H1 (cell line): ENCODE measurements at regions of chr6 and their contacts with region 1.

Region 1: DNA sequence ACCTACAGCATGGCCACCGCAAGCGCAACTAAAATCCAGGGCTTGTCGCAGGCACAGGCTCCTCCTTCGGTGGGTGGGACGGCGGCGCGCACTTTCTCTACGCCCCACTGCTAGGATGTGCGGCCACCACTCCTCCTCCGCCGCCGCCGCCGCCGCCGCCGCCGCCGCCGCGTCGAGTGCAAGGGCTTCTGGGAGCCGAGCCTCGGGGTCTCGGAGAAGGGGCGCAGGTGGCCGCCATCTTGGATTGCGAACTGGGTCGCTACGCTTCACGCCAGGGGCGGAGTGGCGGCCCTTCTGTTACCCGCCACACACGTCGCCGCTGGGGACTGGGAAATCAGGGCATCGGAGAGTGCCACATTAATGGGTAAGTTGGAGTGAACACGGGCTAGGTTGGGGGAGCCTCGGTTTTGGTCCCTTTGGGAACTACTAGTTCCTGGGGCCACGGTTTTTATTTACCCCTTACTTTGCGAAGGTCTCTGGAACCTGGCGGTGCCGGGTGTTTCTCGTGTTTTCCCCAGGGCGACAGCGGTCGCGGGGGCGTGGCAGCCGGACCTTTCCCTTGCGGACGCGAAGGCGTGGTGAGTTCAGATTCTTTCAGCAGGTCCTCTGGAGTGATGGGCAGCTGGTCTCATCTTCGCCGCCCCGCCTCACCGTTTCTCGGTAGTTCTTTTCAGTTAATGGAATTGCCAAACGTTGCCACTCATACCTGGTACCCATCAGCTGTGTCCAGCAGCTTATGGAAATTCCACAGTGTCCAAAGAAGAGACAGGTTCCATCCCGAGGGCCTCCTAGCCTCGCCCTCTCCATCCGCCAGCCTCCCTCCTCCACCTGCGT is at the start of gene KPNA5:
- DNase-seq: peak; percentile 67 to 89
- H3K4me3 ChIP-seq: peak within 1 kb of the TSS; percentile 81 to 93 (median 88)
- H3K27ac ChIP-seq: peak within 1 kb of the TSS; percentile 91
- H3K4me1 ChIP-seq: peaks cover 0 to 2% (median 0%) of the 10 kb centered on the region in 4 experiments; a peak in 1 of 7 replicates
- H3K27me3 ChIP-seq: no peaks in the 10 kb centered on the region
- CTCF ChIP-seq: no peak
- EP300 ChIP-seq: peak in 1 of 2 experiments; percentile 64; a peak in 1 of 3 replicates
- POLR2A ChIP-seq: peak; percentile 63 to 94
- RAD21 ChIP-seq: no peak
- total RNA-seq, gene KPNA5: 9.7 and 11.7 TPM in 2 replicates

Region 2: DNA sequence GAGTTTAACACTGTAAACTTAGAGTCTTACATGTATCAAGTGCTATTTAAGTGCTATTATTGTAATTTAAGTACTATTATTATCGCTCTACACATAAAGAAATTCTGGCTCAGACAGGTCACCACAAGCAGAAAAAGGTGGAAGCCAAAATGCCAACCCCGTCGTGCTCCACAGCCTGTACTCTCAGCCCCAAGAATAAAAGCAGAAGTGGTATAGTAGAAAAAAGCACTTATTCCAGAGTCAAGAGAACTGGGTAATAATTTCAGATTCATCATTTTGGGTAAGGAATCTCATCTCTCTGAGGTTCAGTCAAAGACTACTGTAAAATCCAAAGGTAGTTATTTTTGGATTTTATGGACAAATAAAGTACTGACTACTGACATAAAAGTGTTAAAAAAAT is 13.6 kb before region 1 on chr6:
- CTCF ChIA-PET with region 1: interaction called, 5 read pairs
- POLR2A ChIA-PET with region 1: interaction called, 10 read pairs
- DNase-seq: no peak
- H3K4me3 ChIP-seq: peak overlapping the region; percentile 83 to 100 (median 98); a peak in 7 of 8 replicates
- H3K27ac ChIP-seq: no peak overlapping the region
- H3K4me1 ChIP-seq: peaks cover 0 to 3% (median 1%) of the 10 kb centered on the region in 4 experiments; a peak in 2 of 7 replicates
- H3K27me3 ChIP-seq: no peaks in the 10 kb centered on the region
- CTCF ChIP-seq: no peak
- EP300 ChIP-seq: no peak
- POLR2A ChIP-seq: no peak
- RAD21 ChIP-seq: no peak

Region 3: DNA sequence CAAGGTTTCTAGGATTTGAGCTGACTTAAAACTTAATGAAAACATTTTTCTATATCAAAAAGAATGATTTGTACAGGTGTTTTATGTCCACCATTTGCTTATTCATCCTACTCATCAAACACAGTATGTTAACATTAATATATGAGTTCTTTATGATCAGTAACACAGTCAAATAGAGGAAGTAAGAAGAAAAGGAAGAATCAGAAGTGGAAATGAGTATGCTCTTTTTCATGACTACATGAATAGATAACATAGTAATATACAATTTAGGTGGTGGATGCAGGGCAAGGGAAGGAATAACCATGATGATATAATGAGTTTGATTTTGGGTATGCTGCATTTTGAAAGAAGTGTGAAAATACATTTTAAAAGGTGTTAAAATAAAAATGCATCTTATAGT is 16.3 kb after region 1 on chr6:
- CTCF ChIA-PET with region 1: no interaction called
- POLR2A ChIA-PET with region 1: no interaction called
- DNase-seq: no peak
- H3K4me3 ChIP-seq: no peak overlapping the region
- H3K27ac ChIP-seq: no peak overlapping the region
- H3K4me1 ChIP-seq: no peaks in the 10 kb centered on the region
- H3K27me3 ChIP-seq: no peaks in the 10 kb centered on the region
- CTCF ChIP-seq: no peak
- EP300 ChIP-seq: no peak
- POLR2A ChIP-seq: no peak
- RAD21 ChIP-seq: no peak

Region 4: GRCh38 chr6:116714761-116715160 is 33.6 kb after region 1 on chr6:
- CTCF ChIA-PET with region 1: no interaction called
- POLR2A ChIA-PET with region 1: no interaction called
- DNase-seq: no peak
- H3K4me3 ChIP-seq: no peak overlapping the region
- H3K27ac ChIP-seq: no peak overlapping the region
- H3K4me1 ChIP-seq: no peaks in the 10 kb centered on the region
- H3K27me3 ChIP-seq: no peaks in the 10 kb centered on the region
- CTCF ChIP-seq: no peak
- EP300 ChIP-seq: no peak
- POLR2A ChIP-seq: no peak
- RAD21 ChIP-seq: no peak